Esophagus muscularis mucosa (tissue), 4 donors: ENCODE measurements at regions of chr11 and their contacts with region 1.

Region 1: DNA sequence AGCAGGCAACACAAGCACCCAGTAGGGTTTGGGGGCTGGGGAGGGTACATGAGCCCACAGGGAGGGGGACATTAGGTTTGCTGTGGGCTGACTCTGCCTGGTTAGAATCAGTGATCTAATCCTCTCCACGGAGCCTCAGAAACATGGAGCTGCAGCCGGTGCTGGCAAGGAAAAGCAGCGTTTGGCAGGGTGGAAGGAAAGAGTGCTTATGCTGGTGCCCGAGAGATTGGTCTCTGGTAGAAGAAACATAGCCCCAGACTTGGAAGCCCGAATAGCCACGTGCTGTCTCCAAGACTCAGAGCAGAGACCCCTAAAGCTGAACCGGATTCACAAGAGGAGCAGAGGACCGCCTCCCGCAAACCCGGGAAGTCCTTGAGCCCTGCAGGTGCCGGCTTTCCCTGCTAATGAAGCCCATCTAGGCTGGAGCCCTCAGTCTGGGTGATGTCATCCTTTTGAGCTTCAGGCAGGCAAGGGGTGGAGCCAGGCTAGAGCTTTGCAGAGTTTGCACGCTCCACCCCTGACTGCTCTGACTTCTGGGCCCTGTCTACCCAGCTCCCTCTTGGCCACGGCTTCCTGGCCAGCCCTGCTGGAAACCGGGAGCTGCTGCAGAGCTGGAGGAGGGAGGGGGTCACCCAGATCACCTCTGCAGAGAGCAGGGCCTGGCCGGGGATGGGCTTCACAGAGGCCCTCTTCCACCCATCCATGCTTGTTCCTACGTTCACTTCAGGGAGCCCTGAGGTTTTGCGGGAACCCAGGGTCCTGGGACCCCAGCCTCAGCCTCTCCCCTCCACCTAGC is 35.0 kb upstream of the JAM3 start:
- DNase-seq: peak; percentile 97
- H3K4me3 ChIP-seq: peak overlapping the region; percentile 39 to 43 (median 40)
- H3K27ac ChIP-seq: peak overlapping the region; percentile 88 to 96 (median 93)
- H3K4me1 ChIP-seq: peaks cover 45 to 66% (median 66%) of the 10 kb centered on the region in 4 donors
- H3K27me3 ChIP-seq: no peaks in the 10 kb centered on the region
- CTCF ChIP-seq: peak in 2 of 3 experiments; percentile 10 to 18
- EP300 ChIP-seq: no peak
- POLR2A ChIP-seq: no peak

Region 2: GRCh38 chr11:133830931-133831907 is 202.7 kb before region 1 on chr11:
- intact Hi-C with region 1: no loop called
- DNase-seq: peak; percentile 86
- H3K4me3 ChIP-seq: no peak overlapping the region
- H3K27ac ChIP-seq: no peak overlapping the region
- H3K4me1 ChIP-seq: peaks cover 0 to 13% (median 0%) of the 10 kb centered on the region in 4 donors
- H3K27me3 ChIP-seq: peaks cover 0 to 22% (median 9%) of the 10 kb centered on the region in 4 donors
- CTCF ChIP-seq: no peak
- EP300 ChIP-seq: no peak
- POLR2A ChIP-seq: no peak

Region 3: GRCh38 chr11:133966921-133967598 is 66.8 kb before region 1 on chr11:
- intact Hi-C with region 1: loop called (anchors 5 kb)
- DNase-seq: no peak
- H3K4me3 ChIP-seq: peak overlapping the region; percentile 22 to 34 (median 26)
- H3K27ac ChIP-seq: peak overlapping the region; percentile 71 to 82 (median 80)
- H3K4me1 ChIP-seq: peaks cover 3 to 50% (median 43%) of the 10 kb centered on the region in 4 donors
- H3K27me3 ChIP-seq: no peaks in the 10 kb centered on the region
- CTCF ChIP-seq: peak; percentile 49 to 69 (median 57)
- EP300 ChIP-seq: no peak
- POLR2A ChIP-seq: no peak

Region 4: GRCh38 chr11:134101282-134101681 is 67.4 kb after region 1 on chr11:
- intact Hi-C with region 1: no loop called
- DNase-seq: no peak
- H3K4me3 ChIP-seq: no peak overlapping the region
- H3K27ac ChIP-seq: no peak overlapping the region
- H3K4me1 ChIP-seq: no peaks in the 10 kb centered on the region
- H3K27me3 ChIP-seq: no peaks in the 10 kb centered on the region
- CTCF ChIP-seq: no peak
- EP300 ChIP-seq: no peak
- POLR2A ChIP-seq: no peak

Region 5: GRCh38 chr11:134181707-134182106 is 147.8 kb after region 1 on chr11:
- intact Hi-C with region 1: no loop called
- DNase-seq: no peak
- H3K4me3 ChIP-seq: no peak overlapping the region
- H3K27ac ChIP-seq: no peak overlapping the region
- H3K4me1 ChIP-seq: no peaks in the 10 kb centered on the region
- H3K27me3 ChIP-seq: no peaks in the 10 kb centered on the region
- CTCF ChIP-seq: no peak
- EP300 ChIP-seq: no peak
- POLR2A ChIP-seq: no peak